Activated CD8-positive, alpha-beta T cell treated with anti-CD3 and anti-CD28 coated beads for 36 hours (primary cell): ENCODE measurements at regions of chr6 and their contacts with region 1.

Region 1: DNA sequence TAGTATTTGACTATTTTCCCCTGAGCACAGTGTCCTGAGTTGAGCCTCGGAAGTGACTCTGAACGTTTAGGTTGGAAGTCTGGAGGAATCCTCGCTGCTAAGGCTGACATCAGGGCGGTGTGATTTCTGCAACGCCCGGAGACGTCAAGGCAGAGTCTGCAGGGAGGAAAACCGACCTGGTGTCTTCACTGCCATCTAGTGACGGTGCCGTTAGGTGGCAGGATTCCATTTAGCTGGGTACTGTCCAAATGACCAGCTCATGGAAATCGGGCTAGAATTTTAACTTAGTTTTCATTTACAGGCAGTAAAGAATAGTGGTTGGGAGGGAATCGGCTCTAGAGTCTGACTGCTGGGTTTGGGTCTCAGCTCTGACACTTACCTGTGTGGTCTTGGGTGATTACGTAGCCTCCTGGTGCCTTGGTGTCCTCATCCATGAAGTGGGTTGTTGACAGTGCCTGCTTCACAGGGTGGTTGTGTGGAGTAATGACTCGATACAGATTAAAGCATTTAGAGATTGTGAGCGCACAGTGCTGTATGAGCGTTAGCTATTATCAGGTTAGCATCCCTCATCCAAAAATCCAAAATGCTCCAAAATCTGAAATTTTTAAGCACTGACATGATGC is 35.0 kb downstream of the FOXF2 start:
- DNase-seq: peak; percentile 41
- ATAC-seq: no peak
- H3K4me3 Mint-ChIP-seq: no peak overlapping the region
- H3K27ac Mint-ChIP-seq: no peak overlapping the region
- H3K4me1 Mint-ChIP-seq: peaks cover 3% of the 10 kb centered on the region
- H3K27me3 Mint-ChIP-seq: peaks cover 20% of the 10 kb centered on the region
- CTCF ChIP-seq: peak; percentile 47

Region 2: DNA sequence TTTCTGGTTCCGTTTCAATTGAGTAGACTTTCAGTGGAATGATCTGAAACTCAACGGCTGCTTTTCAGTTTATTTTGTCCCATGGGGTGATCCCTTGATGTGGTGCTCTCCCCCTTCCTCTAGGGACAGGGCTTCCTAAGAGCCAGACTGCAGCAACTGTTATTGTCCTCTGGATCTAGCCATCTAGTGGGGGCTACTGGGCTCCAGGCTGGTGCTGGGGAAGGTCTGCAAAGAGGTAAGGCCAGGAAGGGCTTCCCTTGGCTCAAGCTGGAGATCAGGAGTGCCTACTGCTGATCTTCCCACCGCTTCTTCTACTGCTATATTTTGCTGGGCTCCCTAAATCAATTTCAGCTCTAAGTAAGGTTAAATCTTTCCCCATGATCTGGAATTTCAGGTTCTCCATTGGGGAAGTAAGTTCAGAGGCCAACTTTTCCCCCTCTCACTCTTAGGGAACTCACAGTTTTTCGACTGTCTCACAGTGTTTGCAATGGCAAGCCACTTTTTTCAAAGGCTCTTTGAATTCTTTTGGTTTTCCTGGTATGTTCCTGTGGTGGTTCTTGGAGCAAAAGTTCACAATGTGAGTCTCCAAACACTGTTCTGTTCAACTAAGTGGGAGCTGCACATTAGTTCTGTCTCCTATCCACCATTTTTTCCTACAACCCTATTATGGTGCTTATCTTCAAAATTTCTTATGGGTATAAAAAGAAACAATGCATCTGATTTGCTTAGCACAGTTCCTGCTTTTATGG is 445.3 kb before region 1 on chr6:
- CTCF ChIA-PET with region 1: no interaction called
- POLR2A ChIA-PET with region 1: no interaction called
- intact Hi-C with region 1: loop called (anchors 5 kb)
- DNase-seq: no peak
- ATAC-seq: no peak
- H3K4me3 Mint-ChIP-seq: no peak overlapping the region
- H3K27ac Mint-ChIP-seq: no peak overlapping the region
- H3K4me1 Mint-ChIP-seq: no peaks in the 10 kb centered on the region
- H3K27me3 Mint-ChIP-seq: peaks cover 11% of the 10 kb centered on the region
- CTCF ChIP-seq: no peak

Region 3: DNA sequence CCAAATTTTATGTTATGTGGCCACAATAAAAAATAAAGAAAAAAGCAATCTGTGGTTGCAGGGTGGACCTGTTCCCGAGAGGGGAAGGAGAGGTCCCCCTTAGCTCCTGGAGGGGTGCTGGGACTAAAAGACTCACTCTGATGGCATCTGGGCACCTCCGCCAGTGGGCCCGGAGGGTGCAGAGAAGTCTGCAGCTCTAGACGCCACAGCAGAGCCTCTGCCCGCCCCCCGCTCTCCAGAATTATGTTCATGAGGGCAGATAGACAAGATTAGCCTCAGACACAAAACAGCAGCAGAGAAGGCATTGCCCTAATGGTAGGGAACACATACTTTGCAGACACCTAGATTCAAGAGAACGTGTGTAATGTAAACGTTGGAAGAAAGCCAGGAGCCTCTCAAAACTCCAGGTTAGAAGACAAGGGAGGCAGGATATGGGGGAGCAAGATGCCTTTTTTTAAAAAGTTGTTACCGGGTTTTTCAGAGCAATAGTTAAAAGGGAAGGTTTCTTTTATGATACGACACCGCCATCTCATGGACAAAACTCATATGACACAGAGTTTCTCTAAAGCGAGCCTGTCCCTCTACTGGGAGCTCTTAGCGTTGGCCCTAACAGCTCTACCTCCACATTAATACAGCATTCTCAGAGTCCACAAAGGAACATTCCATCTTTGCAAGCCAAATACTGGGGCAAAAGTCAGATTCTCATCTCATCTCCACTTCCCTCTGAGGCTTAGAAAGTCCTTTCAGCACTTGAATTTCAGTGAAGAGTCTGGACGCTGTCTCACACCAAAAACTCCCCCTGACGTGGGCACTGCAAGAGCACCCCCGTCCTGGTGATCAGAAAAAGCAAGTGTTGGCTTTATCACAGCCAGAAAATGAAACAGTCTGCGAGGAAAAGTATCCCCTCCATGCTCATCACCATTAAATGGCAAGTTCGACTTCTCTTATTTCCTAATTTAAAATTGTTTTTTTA is 12.2 kb after region 1 on chr6:
- CTCF ChIA-PET with region 1: interaction called, 11 read pairs
- POLR2A ChIA-PET with region 1: interaction called, 3 read pairs
- intact Hi-C with region 1: no loop called
- DNase-seq: peak; percentile 61
- ATAC-seq: peak; percentile 87
- H3K4me3 Mint-ChIP-seq: no peak overlapping the region
- H3K27ac Mint-ChIP-seq: no peak overlapping the region
- H3K4me1 Mint-ChIP-seq: no peaks in the 10 kb centered on the region
- H3K27me3 Mint-ChIP-seq: peaks cover 39% of the 10 kb centered on the region
- CTCF ChIP-seq: peak; percentile 77

Region 4: GRCh38 chr6:1856381-1856780 is 432.0 kb after region 1 on chr6:
- CTCF ChIA-PET with region 1: no interaction called
- POLR2A ChIA-PET with region 1: no interaction called
- intact Hi-C with region 1: no loop called
- DNase-seq: no peak
- ATAC-seq: no peak
- H3K4me3 Mint-ChIP-seq: no peak overlapping the region
- H3K27ac Mint-ChIP-seq: no peak overlapping the region
- H3K4me1 Mint-ChIP-seq: peaks cover 4% of the 10 kb centered on the region
- H3K27me3 Mint-ChIP-seq: no peaks in the 10 kb centered on the region
- CTCF ChIP-seq: no peak